ENCODE measurements at regions of chr10 and their contacts with region 1.

Region 1: GRCh38 chr10:102299873-102300272 is 54.5 kb downstream of the GBF1 start:
- DNase-seq: no peak
- ATAC-seq: peak in 1 of 2 donors; percentile 84

Region 2: GRCh38 chr10:102245101-102245931 is 54.6 kb before region 1 on chr10 and contains the start of gene GBF1:
- intact Hi-C with region 1: loop called in 1 of 2 experiments (anchors 10 kb)
- DNase-seq: peak; percentile 93
- ATAC-seq: peak; percentile 91 to 94
- total RNA-seq, gene GBF1: 27.6 to 32.4 TPM

Region 3: DNA sequence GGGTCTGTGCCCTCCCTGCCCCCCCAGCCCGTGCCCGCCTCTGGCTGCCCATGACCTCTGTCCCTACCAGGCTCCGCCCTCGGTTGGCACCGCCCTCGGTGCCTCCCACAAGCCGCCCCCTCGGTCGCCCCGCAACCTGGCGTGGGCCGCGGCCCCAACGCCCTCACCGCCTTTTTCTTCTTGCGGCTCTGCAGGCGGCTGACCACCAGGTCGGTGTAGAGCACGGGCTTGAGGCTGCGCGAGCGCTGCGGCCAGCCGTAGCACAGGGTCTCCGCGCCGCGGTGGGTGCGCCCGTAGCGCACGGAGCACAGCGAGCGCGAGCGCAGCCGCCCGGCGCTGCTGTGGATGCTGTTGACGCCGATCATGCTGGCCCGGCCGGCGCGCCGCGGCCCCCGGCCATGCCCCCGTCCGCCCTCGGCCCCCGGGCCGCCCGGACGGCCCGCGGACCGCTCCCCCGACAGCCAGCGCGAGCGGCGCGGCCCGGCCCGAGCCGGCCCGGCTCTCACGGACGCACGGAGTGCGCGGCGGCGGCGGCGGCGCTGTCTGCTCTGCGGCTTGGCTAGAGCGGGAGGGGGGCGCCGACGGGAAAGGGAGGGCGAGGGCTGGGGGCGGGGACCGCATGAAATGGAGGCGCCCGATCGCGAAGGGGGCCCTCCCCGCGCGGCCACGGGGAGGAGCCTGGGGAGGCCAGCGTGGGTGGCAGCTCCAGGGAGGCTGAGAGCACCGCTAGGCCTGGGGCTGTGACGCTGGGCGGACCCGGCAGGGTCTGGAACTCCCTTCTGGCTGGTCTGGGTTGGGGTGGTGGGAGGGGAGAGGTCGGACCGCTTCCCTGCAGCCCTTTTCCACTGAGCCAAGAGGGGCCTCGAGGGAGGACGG is 109.1 kb after region 1 on chr10:
- intact Hi-C with region 1: no loop called
- DNase-seq: peak; percentile 65
- ATAC-seq: peak; percentile 42 to 69